ENCODE measurements at regions of chr17 and their contacts with region 1.

Region 1: GRCh38 chr17:55533608-55534007 is 22.4 kb upstream of the SMIM36 start:
- DNase-seq: no peak
- ATAC-seq: no peak
- H3K4me3 Mint-ChIP-seq: no peak overlapping the region
- H3K27ac Mint-ChIP-seq: no peak overlapping the region
- H3K4me1 Mint-ChIP-seq: no peaks in the 10 kb centered on the region
- H3K27me3 Mint-ChIP-seq: peaks cover 7% of the 10 kb centered on the region
- CTCF ChIP-seq: no peak

Region 2: GRCh38 chr17:55334285-55334684 is 199.3 kb before region 1 on chr17:
- CTCF ChIA-PET with region 1: no interaction called
- POLR2A ChIA-PET with region 1: no interaction called
- intact Hi-C with region 1: no loop called
- DNase-seq: no peak
- ATAC-seq: no peak
- H3K4me3 Mint-ChIP-seq: no peak overlapping the region
- H3K27ac Mint-ChIP-seq: no peak overlapping the region
- H3K4me1 Mint-ChIP-seq: peaks cover 5% of the 10 kb centered on the region
- H3K27me3 Mint-ChIP-seq: peaks cover 19% of the 10 kb centered on the region
- CTCF ChIP-seq: no peak

Region 3: DNA sequence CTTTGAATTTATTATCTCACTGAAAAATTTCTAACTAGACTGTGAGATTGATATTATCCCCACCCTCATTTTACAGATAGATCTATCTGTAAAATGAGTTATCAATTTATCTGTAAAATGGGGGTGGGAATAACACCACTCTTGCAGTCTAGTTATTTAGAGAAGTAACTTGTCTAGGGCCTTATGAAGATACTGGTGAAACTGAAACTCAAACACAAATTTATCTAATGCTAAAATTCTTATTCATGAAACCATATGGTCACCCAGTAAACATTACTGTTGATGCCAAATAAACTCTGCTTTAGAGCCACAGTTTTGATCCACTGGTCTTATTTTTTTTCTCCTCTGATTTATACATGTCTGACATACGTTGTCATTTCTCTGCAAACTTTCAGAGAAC is 29.8 kb after region 1 on chr17:
- CTCF ChIA-PET with region 1: no interaction called
- POLR2A ChIA-PET with region 1: no interaction called
- intact Hi-C with region 1: no loop called
- DNase-seq: no peak
- ATAC-seq: no peak
- H3K4me3 Mint-ChIP-seq: no peak overlapping the region
- H3K27ac Mint-ChIP-seq: no peak overlapping the region
- H3K4me1 Mint-ChIP-seq: no peaks in the 10 kb centered on the region
- H3K27me3 Mint-ChIP-seq: peaks cover 11% of the 10 kb centered on the region
- CTCF ChIP-seq: no peak

Region 4: GRCh38 chr17:55601874-55602364 is 68.3 kb after region 1 on chr17:
- CTCF ChIA-PET with region 1: interaction called, 85 read pairs
- POLR2A ChIA-PET with region 1: no interaction called
- intact Hi-C with region 1: loop called (anchors 5 kb)
- DNase-seq: peak; percentile 14
- ATAC-seq: peak; percentile 58
- H3K4me3 Mint-ChIP-seq: no peak overlapping the region
- H3K27ac Mint-ChIP-seq: no peak overlapping the region
- H3K4me1 Mint-ChIP-seq: no peaks in the 10 kb centered on the region
- H3K27me3 Mint-ChIP-seq: peaks cover 7% of the 10 kb centered on the region
- CTCF ChIP-seq: peak; percentile 62

Measured in activated CD8-positive, alpha-beta T cell treated with anti-CD3 and anti-CD28 coated beads for 36 hours (primary cell).